ENCODE measurements at regions of chr2 and their contacts with region 1.

Region 1: DNA sequence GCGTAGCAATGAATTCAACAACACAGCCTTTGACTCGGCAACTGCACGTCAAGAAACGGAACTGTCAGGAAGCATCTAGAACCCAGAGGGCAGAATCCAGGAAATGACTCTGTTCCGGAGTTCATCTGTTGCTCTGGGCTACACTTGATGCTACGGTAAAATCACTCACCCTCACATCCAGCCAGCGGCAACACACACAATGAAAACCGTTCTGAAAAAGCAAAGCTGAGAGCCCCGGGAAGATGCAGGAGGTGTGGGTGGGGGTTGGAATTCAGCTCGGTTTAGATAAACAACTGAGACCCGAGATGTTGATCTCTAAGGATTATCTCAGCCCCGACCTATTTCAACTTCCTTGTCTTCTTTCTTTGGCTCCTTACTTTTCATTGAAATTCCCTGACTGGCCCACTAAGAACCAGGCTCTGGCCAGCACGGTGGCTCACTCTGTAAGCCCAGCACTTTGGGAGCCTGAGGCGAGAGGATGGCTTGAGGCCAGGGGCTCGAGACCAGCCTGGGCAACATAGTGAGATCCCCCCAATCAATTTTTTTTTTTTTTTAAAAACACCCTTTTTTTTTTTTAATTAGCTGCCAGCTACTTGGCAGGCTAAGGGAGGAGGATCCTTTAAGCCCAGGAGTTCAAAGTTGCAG is 13.3 kb upstream of the RAB17 start:
- DNase-seq: peak; percentile 96
- H3K4me3 ChIP-seq: no peak overlapping the region
- H3K27ac ChIP-seq: peak overlapping the region; percentile 91
- H3K4me1 ChIP-seq: peaks cover 29% of the 10 kb centered on the region
- H3K27me3 ChIP-seq: no peaks in the 10 kb centered on the region
- CTCF ChIP-seq: no peak
- POLR2A ChIP-seq: no peak

Region 2: GRCh38 chr2:237471440-237472183 is 132.2 kb before region 1 on chr2:
- CTCF ChIA-PET with region 1: no interaction called
- POLR2A ChIA-PET with region 1: no interaction called
- dilution Hi-C with region 1: no loop called
- intact Hi-C with region 1: no loop called
- DNase-seq: peak; percentile 22
- H3K4me3 ChIP-seq: no peak overlapping the region
- H3K27ac ChIP-seq: no peak overlapping the region
- H3K4me1 ChIP-seq: peaks cover 12% of the 10 kb centered on the region
- H3K27me3 ChIP-seq: peaks cover 9 to 11% of the 10 kb centered on the region in 2 experiments
- CTCF ChIP-seq: peak; percentile 48 to 70
- POLR2A ChIP-seq: no peak

Region 3: GRCh38 chr2:237616734-237617586 is 13.1 kb after region 1 on chr2:
- CTCF ChIA-PET with region 1: interaction called, 17 read pairs
- POLR2A ChIA-PET with region 1: interaction called, 4 read pairs
- dilution Hi-C with region 1: no loop called
- intact Hi-C with region 1: loop called (anchors 1 kb)
- DNase-seq: peak; percentile 91
- H3K4me3 ChIP-seq: no peak overlapping the region
- H3K27ac ChIP-seq: peak overlapping the region; percentile 99
- H3K4me1 ChIP-seq: peaks cover 54% of the 10 kb centered on the region
- H3K27me3 ChIP-seq: no peaks in the 10 kb centered on the region
- CTCF ChIP-seq: no peak
- POLR2A ChIP-seq: peak; percentile 28

Region 4: DNA sequence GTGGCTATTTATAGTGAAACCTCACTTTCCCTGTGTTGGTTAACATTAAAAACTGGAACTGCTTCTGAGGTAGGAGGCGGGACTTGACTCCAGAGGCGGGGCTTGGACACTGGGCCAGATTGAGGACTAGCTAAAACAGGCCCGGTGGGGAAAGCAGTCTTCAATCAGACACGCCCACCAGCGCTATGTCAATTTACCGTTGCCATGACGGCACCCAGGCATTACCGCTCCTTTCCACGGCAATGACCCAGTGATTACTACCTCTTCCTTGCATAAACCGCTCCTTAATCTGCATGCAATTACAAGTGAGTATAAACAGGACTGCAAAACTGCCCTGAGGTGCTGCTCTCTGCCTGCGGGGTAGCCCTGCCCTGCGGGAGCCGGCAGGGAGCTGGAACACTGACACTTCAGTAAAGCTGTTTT is 58.8 kb after region 1 on chr2:
- CTCF ChIA-PET with region 1: interaction called, 3 read pairs
- POLR2A ChIA-PET with region 1: no interaction called
- dilution Hi-C with region 1: no loop called
- intact Hi-C with region 1: loop called (anchors 2 kb)
- DNase-seq: peak; percentile 78
- H3K4me3 ChIP-seq: no peak overlapping the region
- H3K27ac ChIP-seq: no peak overlapping the region
- H3K4me1 ChIP-seq: no peaks in the 10 kb centered on the region
- H3K27me3 ChIP-seq: no peaks in the 10 kb centered on the region
- CTCF ChIP-seq: no peak
- POLR2A ChIP-seq: no peak

Region 5: GRCh38 chr2:237691908-237692600 is 88.2 kb after region 1 on chr2:
- CTCF ChIA-PET with region 1: interaction called, 4 read pairs
- POLR2A ChIA-PET with region 1: interaction called, 3 read pairs
- dilution Hi-C with region 1: no loop called
- intact Hi-C with region 1: loop called (anchors 1 kb)
- DNase-seq: peak; percentile 69
- H3K4me3 ChIP-seq: peak overlapping the region; percentile 81 to 86 (median 84)
- H3K27ac ChIP-seq: peak overlapping the region; percentile 87
- H3K4me1 ChIP-seq: peaks cover 55% of the 10 kb centered on the region
- H3K27me3 ChIP-seq: no peaks in the 10 kb centered on the region
- CTCF ChIP-seq: no peak
- POLR2A ChIP-seq: no peak

Region 6: GRCh38 chr2:237824085-237824484 is 220.2 kb after region 1 on chr2:
- CTCF ChIA-PET with region 1: no interaction called
- POLR2A ChIA-PET with region 1: no interaction called
- dilution Hi-C with region 1: no loop called
- intact Hi-C with region 1: no loop called
- DNase-seq: no peak
- H3K4me3 ChIP-seq: no peak overlapping the region
- H3K27ac ChIP-seq: no peak overlapping the region
- H3K4me1 ChIP-seq: no peaks in the 10 kb centered on the region
- H3K27me3 ChIP-seq: no peaks in the 10 kb centered on the region
- CTCF ChIP-seq: no peak
- POLR2A ChIP-seq: no peak

Measured in endothelial cell of umbilical vein (primary cell).